CD4-positive, alpha-beta memory T cell (primary cell): ENCODE measurements at regions of chr2 and their contacts with region 1.

Region 1: GRCh38 chr2:120223034-120223912 is at the start of gene TMEM185B:
- DNase-seq: peak; percentile 89 to 94 (median 90)
- H3K4me3 ChIP-seq: peak within 1 kb of the TSS; percentile 73 to 75
- H3K4me3 Mint-ChIP-seq: peak within 1 kb of the TSS; percentile 86 to 91 (median 88)
- H3K27ac ChIP-seq: peak within 1 kb of the TSS; percentile 86
- H3K27ac Mint-ChIP-seq: peak within 1 kb of the TSS; percentile 90 to 97 (median 92)
- H3K4me1 ChIP-seq: peaks cover 35% of the 10 kb centered on the region
- H3K4me1 Mint-ChIP-seq: peaks cover 31 to 67% (median 47%) of the 10 kb centered on the region in 4 donors
- H3K27me3 ChIP-seq: no peaks in the 10 kb centered on the region
- H3K27me3 Mint-ChIP-seq: no peaks in the 10 kb centered on the region
- total RNA-seq, gene TMEM185B: 20.3 to 20.8 TPM

Region 2: GRCh38 chr2:120109186-120110061 is 113.8 kb before region 1 on chr2:
- CTCF ChIA-PET with region 1: interaction called, 4 read pairs
- POLR2A ChIA-PET with region 1: interaction called, 8 read pairs
- intact Hi-C with region 1: loop called (anchors 5 kb)
- DNase-seq: peak in 4 of 5 donors; percentile 49 to 64 (median 56)
- H3K4me3 ChIP-seq: peak overlapping the region in 1 of 2 donors; percentile 25
- H3K4me3 Mint-ChIP-seq: peak overlapping the region; percentile 49 to 89 (median 80)
- H3K27ac ChIP-seq: peak overlapping the region; percentile 23
- H3K27ac Mint-ChIP-seq: peak overlapping the region in 6 of 7 donors; percentile 45 to 91 (median 64)
- H3K4me1 ChIP-seq: peaks cover 23% of the 10 kb centered on the region
- H3K4me1 Mint-ChIP-seq: peaks cover 18 to 24% (median 21%) of the 10 kb centered on the region in 4 donors
- H3K27me3 ChIP-seq: no peaks in the 10 kb centered on the region
- H3K27me3 Mint-ChIP-seq: peaks cover 0 to 1% of the 10 kb centered on the region in 2 donors

Region 3: GRCh38 chr2:120206022-120206581 is 17.2 kb before region 1 on chr2:
- CTCF ChIA-PET with region 1: no interaction called
- POLR2A ChIA-PET with region 1: interaction called, 10 read pairs
- intact Hi-C with region 1: no loop called
- DNase-seq: no peak
- H3K4me3 ChIP-seq: no peak overlapping the region
- H3K4me3 Mint-ChIP-seq: no peak overlapping the region
- H3K27ac ChIP-seq: no peak overlapping the region
- H3K27ac Mint-ChIP-seq: peak overlapping the region in 1 of 7 donors; percentile 59
- H3K4me1 ChIP-seq: peaks cover 14% of the 10 kb centered on the region
- H3K4me1 Mint-ChIP-seq: peaks cover 0 to 17% (median 9%) of the 10 kb centered on the region in 4 donors
- H3K27me3 ChIP-seq: no peaks in the 10 kb centered on the region
- H3K27me3 Mint-ChIP-seq: no peaks in the 10 kb centered on the region

Region 4: DNA sequence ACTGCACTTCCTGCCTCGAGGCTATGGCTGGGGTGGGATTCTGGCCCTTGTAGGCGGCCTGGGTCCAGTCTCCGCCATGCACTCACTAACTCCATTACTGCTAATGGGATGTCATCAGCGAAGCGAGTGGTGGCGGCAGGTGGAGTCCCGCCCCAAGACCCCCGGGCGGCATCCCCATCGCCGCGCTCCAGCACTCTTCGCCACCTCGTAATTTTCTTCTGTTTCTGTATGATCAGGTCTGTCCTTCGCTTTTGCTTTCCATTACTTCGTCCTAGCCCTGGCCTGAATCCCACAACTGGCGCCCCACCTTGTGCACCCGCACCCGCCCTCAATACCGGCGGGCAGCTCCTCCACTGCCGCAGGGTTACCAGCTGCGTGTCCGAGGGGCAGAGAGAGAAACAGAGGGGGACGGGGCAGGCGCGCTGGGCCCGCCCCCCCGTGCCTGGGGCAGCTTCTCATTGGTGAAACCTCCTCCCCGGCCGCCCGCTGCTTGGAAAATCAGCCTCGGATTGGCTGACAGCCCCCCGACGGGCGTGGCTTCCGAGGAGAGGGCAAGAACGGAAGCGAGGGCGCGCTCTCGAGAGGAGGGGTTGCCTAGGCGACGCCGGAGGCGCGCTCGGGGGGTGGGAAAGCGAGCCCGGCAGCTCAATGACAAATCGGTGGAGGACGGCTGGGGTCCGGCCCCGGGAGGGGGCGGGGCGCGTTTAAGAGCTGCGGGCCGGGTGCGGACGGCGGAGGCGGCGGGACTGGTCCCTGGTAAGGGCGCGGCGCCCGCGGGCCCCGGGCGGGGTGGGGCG is 29.1 kb after region 1 on chr2 and contains the start of gene RALB:
- CTCF ChIA-PET with region 1: interaction called, 4 read pairs
- POLR2A ChIA-PET with region 1: interaction called, 32 read pairs
- intact Hi-C with region 1: loop called (anchors 1 kb)
- DNase-seq: peak; percentile 97 to 99 (median 97)
- H3K4me3 ChIP-seq: peak within 1 kb of the TSS; percentile 78 to 80
- H3K4me3 Mint-ChIP-seq: peak within 1 kb of the TSS; percentile 99 to 100 (median 100)
- H3K27ac ChIP-seq: peak within 1 kb of the TSS; percentile 61
- H3K27ac Mint-ChIP-seq: peak within 1 kb of the TSS; percentile 87 to 99 (median 98)
- H3K4me1 ChIP-seq: peaks cover 44% of the 10 kb centered on the region
- H3K4me1 Mint-ChIP-seq: peaks cover 37 to 51% (median 43%) of the 10 kb centered on the region in 4 donors
- H3K27me3 ChIP-seq: no peaks in the 10 kb centered on the region
- H3K27me3 Mint-ChIP-seq: peaks cover 1 to 3% of the 10 kb centered on the region in 2 donors
- total RNA-seq, gene RALB: 14.0 TPM

Region 5: GRCh38 chr2:120367649-120368048 is 144.4 kb after region 1 on chr2:
- CTCF ChIA-PET with region 1: no interaction called
- POLR2A ChIA-PET with region 1: no interaction called
- intact Hi-C with region 1: no loop called
- DNase-seq: peak in 1 of 5 donors; percentile 13
- H3K4me3 ChIP-seq: no peak overlapping the region
- H3K4me3 Mint-ChIP-seq: no peak overlapping the region
- H3K27ac ChIP-seq: no peak overlapping the region
- H3K27ac Mint-ChIP-seq: no peak overlapping the region
- H3K4me1 ChIP-seq: no peaks in the 10 kb centered on the region
- H3K4me1 Mint-ChIP-seq: no peaks in the 10 kb centered on the region
- H3K27me3 ChIP-seq: no peaks in the 10 kb centered on the region
- H3K27me3 Mint-ChIP-seq: peaks cover 7 to 12% of the 10 kb centered on the region in 2 donors